ENCODE measurements at regions of chr6 and their contacts with region 1.

Region 1: GRCh38 chr6:11700118-11700718 is 78.4 kb downstream of the ADTRP start:
- DNase-seq: peak in 2 of 3 donors; percentile 63 to 72
- H3K4me3 ChIP-seq: no peak overlapping the region
- H3K4me3 Mint-ChIP-seq: no peak overlapping the region
- H3K27ac ChIP-seq: no peak overlapping the region
- H3K27ac Mint-ChIP-seq: peak overlapping the region in 2 of 7 donors; percentile 22 to 30
- H3K4me1 ChIP-seq: peaks cover 7 to 8% of the 10 kb centered on the region in 2 donors
- H3K4me1 Mint-ChIP-seq: peaks cover 11% of the 10 kb centered on the region
- H3K27me3 ChIP-seq: no peaks in the 10 kb centered on the region
- H3K27me3 Mint-ChIP-seq: peaks cover 0 to 2% (median 0%) of the 10 kb centered on the region in 3 donors
- CTCF ChIP-seq: peak; percentile 58

Region 2: DNA sequence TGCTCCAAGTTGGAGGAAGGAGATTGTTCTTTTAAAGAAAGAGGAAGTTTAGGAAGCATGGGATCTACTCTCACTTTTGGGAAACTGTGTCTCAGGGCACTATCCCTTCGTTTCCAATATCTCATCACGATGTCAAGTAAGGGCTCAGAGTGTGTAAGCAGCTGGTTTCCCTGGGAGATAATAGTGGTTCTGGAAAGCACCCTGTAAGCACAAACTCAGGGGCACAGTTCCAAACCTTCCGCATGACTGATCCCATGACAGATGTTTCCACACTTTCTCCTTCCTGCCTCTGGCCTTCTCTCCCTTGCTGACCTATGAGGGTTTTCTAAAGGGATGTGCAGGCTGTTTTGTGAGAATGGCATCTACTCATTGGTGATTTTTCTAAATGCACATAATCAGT is 44.5 kb after region 1 on chr6:
- intact Hi-C with region 1: loop called in 1 of 2 experiments (anchors 5 kb)
- DNase-seq: peak in 1 of 3 donors; percentile 73
- H3K4me3 ChIP-seq: no peak overlapping the region
- H3K4me3 Mint-ChIP-seq: no peak overlapping the region
- H3K27ac ChIP-seq: no peak overlapping the region
- H3K27ac Mint-ChIP-seq: peak overlapping the region in 1 of 7 donors; percentile 22
- H3K4me1 ChIP-seq: peaks cover 7 to 9% of the 10 kb centered on the region in 2 donors
- H3K4me1 Mint-ChIP-seq: peaks cover 3% of the 10 kb centered on the region
- H3K27me3 ChIP-seq: no peaks in the 10 kb centered on the region
- H3K27me3 Mint-ChIP-seq: peaks cover 0 to 5% (median 1%) of the 10 kb centered on the region in 3 donors
- CTCF ChIP-seq: no peak

Region 3: GRCh38 chr6:11824986-11825385 is 124.8 kb after region 1 on chr6:
- intact Hi-C with region 1: no loop called
- DNase-seq: peak in 2 of 3 donors; percentile 11 to 90
- H3K4me3 ChIP-seq: no peak overlapping the region
- H3K4me3 Mint-ChIP-seq: no peak overlapping the region
- H3K27ac ChIP-seq: no peak overlapping the region
- H3K27ac Mint-ChIP-seq: no peak overlapping the region
- H3K4me1 ChIP-seq: peaks cover 12 to 17% of the 10 kb centered on the region in 2 donors
- H3K4me1 Mint-ChIP-seq: peaks cover 18% of the 10 kb centered on the region
- H3K27me3 ChIP-seq: no peaks in the 10 kb centered on the region
- H3K27me3 Mint-ChIP-seq: no peaks in the 10 kb centered on the region
- CTCF ChIP-seq: no peak